Activated naive CD4-positive, alpha-beta T cell treated with anti-CD3 and anti-CD28 coated beads, Interleukin-2, amount 10 ng/mL, durations not matched to agents 7 days and 5 days (primary cell): ENCODE measurements at regions of chr9 and their contacts with region 1.

Region 1: GRCh38 chr9:73116031-73116430 is 35.6 kb upstream of the ANXA1 start:
- DNase-seq: no peak
- H3K4me3 Mint-ChIP-seq: no peak overlapping the region
- H3K27ac Mint-ChIP-seq: no peak overlapping the region
- H3K4me1 Mint-ChIP-seq: peaks cover 25% of the 10 kb centered on the region
- H3K27me3 Mint-ChIP-seq: no peaks in the 10 kb centered on the region

Region 2: DNA sequence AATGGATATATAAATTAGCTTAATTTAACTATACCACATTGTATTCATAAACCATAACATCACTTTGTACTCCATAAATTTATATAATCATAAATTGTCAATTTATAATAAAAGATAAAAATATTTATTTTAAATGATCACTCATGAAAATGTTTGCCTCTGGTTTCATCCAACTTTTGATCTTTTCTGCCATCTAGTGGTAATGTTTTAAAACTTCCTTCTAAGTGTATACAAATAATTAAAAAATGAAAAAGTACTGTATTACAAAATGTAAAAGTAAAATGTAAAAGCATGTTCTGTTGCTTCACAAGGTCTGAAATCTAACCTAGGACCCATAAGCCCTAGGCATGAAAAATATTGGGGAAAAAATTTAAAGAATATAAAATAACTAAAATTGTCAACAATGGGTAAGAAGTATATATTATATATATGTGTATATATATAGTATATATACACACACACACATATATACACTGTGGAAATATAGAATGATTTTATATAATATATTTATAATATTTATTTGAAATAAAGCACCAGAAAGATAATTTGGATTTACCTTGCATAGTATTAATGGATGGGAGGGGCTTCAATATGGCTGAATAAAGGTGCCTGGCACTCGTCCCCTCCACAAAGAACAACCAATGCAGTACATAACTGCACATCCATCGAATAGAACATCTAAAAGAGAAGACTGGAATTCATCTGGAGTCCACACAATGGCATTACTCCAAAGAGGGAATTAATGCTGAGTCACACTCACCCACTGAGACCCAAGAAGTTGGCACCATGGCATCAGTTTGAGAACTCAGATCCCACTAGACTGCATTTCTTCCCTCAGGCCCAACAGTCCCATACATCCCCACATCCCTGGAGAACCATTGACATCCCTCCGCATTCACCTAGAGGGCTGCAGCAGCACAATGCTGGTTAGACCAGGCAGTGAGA is 68.2 kb after region 1 on chr9:
- CTCF ChIA-PET with region 1: interaction called, 31 read pairs
- DNase-seq: no peak
- H3K4me3 Mint-ChIP-seq: no peak overlapping the region
- H3K27ac Mint-ChIP-seq: no peak overlapping the region
- H3K4me1 Mint-ChIP-seq: no peaks in the 10 kb centered on the region
- H3K27me3 Mint-ChIP-seq: peaks cover 5% of the 10 kb centered on the region